ENCODE measurements at regions of chr20 and their contacts with region 1.

Region 1: DNA sequence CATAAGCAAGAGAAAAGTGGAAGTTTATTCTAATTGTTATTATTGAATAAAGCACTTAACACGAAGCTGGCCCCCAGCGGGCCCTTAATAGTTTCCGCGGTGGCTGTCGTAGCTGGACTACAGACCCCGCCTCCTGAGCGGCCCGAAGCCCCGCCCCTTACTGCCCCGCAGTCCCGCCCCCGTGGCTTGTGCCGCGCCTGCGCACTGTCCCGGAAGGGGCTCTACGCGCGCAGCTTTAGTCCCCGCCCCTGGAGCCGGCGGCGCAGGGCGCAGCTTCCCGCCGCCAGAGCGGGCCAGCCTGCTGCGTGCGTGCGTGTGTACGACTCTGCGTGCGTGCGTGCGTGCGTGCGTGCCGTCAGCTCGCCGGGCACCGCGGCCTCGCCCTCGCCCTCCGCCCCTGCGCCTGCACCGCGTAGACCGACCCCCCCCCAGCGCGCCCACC is at the start of gene VAPB:
- DNase-seq: peak; percentile 97
- ATAC-seq: peak; percentile 100
- total RNA-seq, gene VAPB: 66.7 TPM

Region 2: DNA sequence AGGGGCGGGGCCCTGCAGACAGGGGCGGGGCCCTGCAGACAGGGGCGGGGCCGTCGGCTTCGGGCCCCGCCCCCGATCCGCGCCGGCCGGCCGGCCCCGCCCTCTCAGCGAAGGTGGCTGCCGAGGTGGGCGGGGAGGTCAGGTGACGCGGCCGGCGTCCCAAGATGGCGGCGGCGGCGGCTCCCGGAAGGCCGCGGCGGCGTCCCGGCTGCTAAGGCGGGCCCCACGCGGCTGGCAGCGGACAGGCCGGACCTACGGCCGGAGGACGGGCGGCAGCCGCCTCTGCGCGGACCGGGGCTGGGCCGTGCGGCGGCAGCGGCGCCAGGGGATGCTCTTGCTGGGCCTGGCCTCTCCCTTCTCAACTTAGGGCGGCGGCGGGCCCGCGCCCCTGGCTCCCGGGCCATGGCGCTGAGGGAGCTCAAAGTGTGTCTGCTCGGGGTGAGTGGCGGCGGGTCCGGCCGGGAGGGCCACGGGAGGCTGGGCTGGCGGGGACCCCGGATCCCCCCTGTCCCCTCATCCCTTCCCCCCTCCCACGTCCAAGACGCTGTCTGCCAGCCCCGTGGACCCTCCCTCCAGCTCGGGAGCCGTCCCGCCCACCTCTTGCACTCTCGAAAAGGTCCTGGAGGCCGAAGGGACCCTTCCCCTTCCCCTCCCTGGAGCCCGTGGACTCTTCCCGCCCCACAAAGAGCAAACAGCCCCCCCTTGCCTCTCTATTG is 79.2 kb before region 1 on chr20 and contains the start of gene RAB22A:
- intact Hi-C with region 1: loop called (anchors 10 kb)
- DNase-seq: peak; percentile 90
- ATAC-seq: peak; percentile 94
- total RNA-seq, gene RAB22A: 5.8 TPM

Region 3: DNA sequence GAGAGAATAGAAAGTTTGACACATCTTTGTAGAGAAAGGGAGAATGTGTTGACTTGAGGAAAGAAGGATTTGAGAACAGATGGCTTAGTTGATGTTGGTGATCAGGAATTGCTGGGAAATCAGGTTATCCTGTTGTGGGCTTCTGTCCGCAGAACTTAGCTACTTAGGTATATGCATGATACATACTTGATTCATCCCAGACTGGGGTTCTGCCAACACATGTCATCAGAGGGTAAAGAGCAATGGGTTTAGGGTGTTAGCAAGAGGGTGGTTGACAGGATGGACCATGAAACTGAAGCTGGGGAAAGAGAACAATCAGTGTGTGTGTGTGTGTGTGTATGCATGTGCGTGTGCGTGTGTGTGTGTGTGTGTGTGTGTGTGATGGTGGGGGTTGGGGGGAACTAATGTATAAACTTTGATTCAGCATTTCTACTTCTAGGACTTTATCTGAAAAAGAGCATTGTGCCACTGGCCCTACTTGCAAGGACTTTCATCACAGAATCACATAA is 541.6 kb after region 1 on chr20:
- intact Hi-C with region 1: no loop called
- DNase-seq: no peak
- ATAC-seq: no peak

Measured in Right ventricle myocardium superior (tissue), 1 donor.